Calu3 (cell line): ENCODE measurements at regions of chr2 and their contacts with region 1.

Region 1: GRCh38 chr2:230614913-230615332 is 97.7 kb upstream of the CAB39 start:
- DNase-seq: no peak
- H3K4me3 Mint-ChIP-seq: no peak overlapping the region
- H3K27ac Mint-ChIP-seq: no peak overlapping the region
- H3K4me1 Mint-ChIP-seq: peaks cover 9% of the 10 kb centered on the region
- H3K27me3 Mint-ChIP-seq: no peaks in the 10 kb centered on the region
- CTCF ChIP-seq: no peak

Region 2: GRCh38 chr2:229800997-229801754 is 813.7 kb before region 1 on chr2:
- CTCF ChIA-PET with region 1: no interaction called
- intact Hi-C with region 1: loop called (anchors 1 kb)
- DNase-seq: peak; percentile 64
- H3K4me3 Mint-ChIP-seq: no peak overlapping the region
- H3K27ac Mint-ChIP-seq: no peak overlapping the region
- H3K4me1 Mint-ChIP-seq: peaks cover 10% of the 10 kb centered on the region
- H3K27me3 Mint-ChIP-seq: no peaks in the 10 kb centered on the region
- CTCF ChIP-seq: peak; percentile 82

Region 3: DNA sequence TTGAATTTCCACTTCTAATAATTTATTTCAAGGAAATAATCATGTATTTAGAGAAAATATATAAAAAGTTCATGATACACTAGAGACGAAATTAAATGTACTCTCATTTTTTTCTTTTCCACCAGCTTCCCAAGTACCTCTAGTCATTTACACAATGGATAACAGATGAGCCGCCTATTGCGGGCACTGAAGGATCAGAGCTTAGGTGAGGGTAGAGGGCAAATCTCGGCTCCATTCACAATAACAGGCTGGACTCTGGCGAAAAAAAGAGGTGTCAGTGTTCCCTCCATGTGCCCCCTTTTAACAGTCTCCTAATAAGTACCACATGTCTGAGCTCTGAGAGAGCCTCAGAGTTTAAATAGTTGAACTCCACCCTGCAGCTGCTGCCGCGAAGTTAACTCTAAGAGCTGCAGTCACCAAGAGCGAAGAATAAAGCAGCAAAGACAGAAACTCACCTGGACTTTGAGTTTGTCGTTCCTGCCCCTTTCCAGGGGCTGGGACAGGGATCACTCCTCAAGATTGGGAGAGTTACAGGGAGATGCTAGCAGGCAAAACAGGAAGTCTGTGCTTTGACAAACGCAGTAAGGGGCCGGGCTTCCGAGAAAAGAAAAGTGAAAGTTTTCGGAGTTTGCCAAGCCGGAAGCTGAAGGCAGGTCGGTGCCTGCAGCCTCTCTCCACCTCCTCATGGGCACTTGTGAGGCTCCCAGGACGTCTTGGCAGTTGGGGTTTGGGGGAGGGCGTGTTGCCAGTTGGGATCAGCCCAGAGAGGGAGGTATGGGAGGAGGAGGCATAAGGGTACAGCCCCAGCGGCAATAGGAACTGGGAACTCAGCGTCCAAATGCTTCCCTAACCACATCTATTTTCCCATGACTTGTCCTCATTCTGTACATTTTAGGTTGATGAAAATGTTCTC is 395.2 kb before region 1 on chr2 and contains the start of gene SP110:
- CTCF ChIA-PET with region 1: no interaction called
- intact Hi-C with region 1: loop called (anchors 5 kb)
- DNase-seq: peak; percentile 86
- H3K4me3 Mint-ChIP-seq: peak within 1 kb of the TSS; percentile 92
- H3K27ac Mint-ChIP-seq: peak within 1 kb of the TSS; percentile 92
- H3K4me1 Mint-ChIP-seq: peaks cover 36% of the 10 kb centered on the region
- H3K27me3 Mint-ChIP-seq: no peaks in the 10 kb centered on the region
- CTCF ChIP-seq: no peak
- total RNA-seq, gene SP110: 56.7 and 107 TPM in 2 replicates

Region 4: GRCh38 chr2:230423851-230424458 is 191.0 kb before region 1 on chr2:
- CTCF ChIA-PET with region 1: no interaction called
- intact Hi-C with region 1: loop called (anchors 5 kb)
- DNase-seq: peak; percentile 44
- H3K4me3 Mint-ChIP-seq: peak overlapping the region; percentile 42
- H3K27ac Mint-ChIP-seq: peak overlapping the region; percentile 74
- H3K4me1 Mint-ChIP-seq: peaks cover 59% of the 10 kb centered on the region
- H3K27me3 Mint-ChIP-seq: no peaks in the 10 kb centered on the region
- CTCF ChIP-seq: no peak

Region 5: DNA sequence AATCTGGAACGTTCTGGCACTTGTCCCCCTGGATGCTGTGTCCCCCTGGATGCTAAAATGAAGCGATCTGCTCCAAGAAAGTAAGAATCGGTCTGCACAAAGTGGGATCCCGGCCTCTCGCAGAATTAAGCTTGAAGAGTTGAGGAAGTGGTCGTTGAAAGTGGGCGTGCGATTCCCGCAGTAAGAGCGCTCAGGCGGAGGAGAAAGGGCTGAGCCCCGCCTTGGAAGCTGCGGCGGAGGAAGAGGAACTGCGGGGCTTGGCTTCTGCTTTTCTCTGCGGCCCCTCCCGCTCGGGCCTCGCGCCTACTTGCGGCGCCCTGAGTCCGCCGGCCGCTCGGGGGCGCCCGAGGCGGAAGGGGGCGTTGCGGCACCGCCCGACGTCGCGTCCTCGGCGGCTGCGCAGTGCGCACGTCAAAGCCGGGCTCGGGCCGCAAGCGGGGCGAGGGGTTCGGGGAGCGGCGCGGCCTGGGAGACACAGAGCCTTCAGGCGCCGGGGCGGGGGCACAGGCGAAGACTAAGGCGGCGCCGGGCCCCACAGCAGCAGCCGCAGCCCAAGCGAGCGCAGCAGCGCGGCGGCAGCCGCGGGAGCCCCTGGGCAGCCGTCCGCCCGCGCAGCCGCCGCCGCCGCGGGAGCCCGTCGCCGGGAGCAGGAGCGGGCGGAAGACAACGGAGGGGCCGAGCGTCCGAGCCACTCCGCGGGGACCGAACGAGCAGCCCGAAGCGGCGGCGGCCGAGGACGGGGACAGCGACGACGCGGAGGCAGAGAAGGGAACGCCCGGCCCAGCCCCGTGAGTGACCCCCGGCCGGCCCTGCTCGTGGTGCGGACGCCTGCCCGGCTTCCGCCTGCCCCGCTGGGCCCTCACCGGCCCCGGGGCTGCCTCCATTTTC is 97.8 kb after region 1 on chr2 and contains the start of gene CAB39:
- CTCF ChIA-PET with region 1: no interaction called
- intact Hi-C with region 1: loop called (anchors 10 kb)
- DNase-seq: peak; percentile 92
- H3K4me3 Mint-ChIP-seq: peak within 1 kb of the TSS; percentile 94
- H3K27ac Mint-ChIP-seq: peak within 1 kb of the TSS; percentile 90
- H3K4me1 Mint-ChIP-seq: peaks cover 28% of the 10 kb centered on the region
- H3K27me3 Mint-ChIP-seq: no peaks in the 10 kb centered on the region
- CTCF ChIP-seq: peak; percentile 74
- total RNA-seq, gene CAB39: 84.9 and 88.7 TPM in 2 replicates

Region 6: DNA sequence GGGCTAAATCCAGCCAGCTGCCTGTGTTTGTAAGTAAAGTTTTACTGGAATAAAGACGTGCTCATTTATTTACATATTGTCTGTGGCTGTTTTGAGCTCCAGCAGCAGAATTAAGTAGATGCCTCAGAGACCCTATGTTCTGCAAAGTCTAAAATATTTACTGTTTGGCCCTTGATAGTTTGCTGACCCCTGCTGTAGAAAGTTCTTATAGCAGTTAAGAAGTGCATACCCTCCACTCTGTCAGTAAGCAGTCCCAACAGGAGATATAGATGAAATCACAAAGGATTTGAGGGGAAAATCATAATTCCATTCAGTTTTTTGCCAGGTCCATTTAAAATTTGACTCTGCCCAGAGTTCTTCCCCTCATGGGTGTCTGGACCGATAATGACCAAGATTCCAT is 199.7 kb after region 1 on chr2:
- CTCF ChIA-PET with region 1: no interaction called
- intact Hi-C with region 1: loop called (anchors 5 kb)
- DNase-seq: no peak
- H3K4me3 Mint-ChIP-seq: no peak overlapping the region
- H3K27ac Mint-ChIP-seq: no peak overlapping the region
- H3K4me1 Mint-ChIP-seq: no peaks in the 10 kb centered on the region
- H3K27me3 Mint-ChIP-seq: no peaks in the 10 kb centered on the region
- CTCF ChIP-seq: no peak